Endothelial cell of umbilical vein (primary cell): ENCODE measurements at regions of chr22 and their contacts with region 1.

Region 1: DNA sequence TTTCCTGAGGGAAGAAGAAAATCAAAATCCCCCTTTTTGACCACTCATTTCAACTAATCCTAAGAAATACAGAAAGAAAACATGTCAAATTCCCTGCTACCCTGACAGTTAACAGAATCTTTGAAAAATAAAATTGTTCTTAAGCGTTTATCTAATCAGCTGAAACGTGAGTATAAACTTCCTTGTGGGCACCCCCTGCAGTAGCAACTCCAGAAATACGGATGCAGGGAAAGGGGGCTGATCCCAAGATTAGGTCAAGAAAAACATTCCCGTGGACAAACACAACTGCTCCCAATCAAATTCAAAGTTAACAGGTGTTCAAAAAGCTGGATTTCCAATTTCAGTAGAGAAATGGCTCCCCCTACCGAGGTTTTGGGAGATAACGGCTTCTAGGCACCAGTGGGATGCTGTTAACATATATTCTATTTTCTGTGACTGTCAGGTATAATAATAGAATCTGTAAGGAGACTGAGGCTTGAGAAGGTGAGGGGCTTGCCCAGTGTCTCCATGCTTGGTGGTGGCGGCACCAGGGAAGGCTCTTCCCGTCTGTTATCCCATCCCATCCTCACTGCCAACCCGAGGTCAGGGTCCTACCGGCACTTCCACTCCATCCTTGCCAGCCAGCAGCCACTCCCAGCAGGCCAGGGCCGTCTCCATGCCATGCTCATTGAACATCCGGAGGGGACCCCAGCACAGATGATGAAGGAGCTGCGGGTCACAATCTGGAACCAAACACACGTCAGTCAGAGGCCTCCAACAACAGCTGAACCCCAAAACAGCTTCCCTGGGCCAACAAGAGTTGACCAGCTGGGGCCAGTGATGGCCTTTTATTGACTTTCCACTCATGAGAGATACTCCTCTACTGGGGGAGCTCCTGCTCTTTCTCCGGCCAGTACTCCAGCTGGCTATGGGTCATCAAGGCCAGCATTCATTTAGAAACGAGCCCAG is 32.0 kb upstream of the SERPIND1 start:
- DNase-seq: peak; percentile 34
- H3K4me3 ChIP-seq: no peak overlapping the region
- H3K27ac ChIP-seq: no peak overlapping the region
- H3K4me1 ChIP-seq: peaks cover 3% of the 10 kb centered on the region
- H3K27me3 ChIP-seq: no peaks in the 10 kb centered on the region
- CTCF ChIP-seq: peak; percentile 63 to 67
- POLR2A ChIP-seq: no peak

Region 2: DNA sequence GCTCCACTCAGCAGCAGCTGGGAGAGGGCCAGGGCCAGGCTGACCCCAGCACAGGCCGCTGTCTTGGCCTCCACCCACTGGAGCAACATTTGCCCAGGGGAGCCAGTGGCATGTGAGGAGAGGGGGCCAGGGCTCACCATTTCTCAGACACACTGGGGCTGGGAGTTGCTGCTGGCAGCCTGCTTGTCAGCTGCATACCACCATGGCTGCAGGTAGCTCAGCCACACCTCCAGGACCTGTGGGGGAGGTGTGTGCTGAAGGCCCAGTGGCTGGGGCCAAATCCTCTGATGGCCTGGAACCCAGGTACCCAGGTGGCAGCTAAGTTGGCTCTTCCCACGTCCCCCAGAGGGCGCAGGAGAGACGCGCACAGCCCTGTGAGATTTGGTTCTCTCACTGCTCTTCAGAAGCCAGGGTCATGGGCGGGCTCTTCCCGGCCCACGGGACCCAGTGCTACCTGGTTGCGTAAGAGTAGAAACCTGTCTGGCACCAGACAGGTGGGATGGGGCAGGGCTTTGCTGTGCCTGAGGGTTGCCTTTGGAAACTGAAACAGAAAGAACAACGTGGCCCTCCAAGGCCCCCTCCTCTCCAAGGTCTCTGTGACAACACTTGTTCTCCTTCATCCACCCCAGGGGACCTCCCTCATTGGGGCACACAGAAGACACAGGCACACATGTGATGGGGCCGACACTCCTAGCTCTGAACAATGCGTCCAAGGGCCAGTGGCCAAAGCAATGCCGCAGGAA is 135.7 kb before region 1 on chr22:
- CTCF ChIA-PET with region 1: interaction called, 4 read pairs
- POLR2A ChIA-PET with region 1: no interaction called
- dilution Hi-C with region 1: no loop called
- intact Hi-C with region 1: loop called (anchors 1 kb)
- DNase-seq: peak; percentile 49
- H3K4me3 ChIP-seq: no peak overlapping the region
- H3K27ac ChIP-seq: no peak overlapping the region
- H3K4me1 ChIP-seq: no peaks in the 10 kb centered on the region
- H3K27me3 ChIP-seq: peaks cover 0 to 1% of the 10 kb centered on the region in 2 experiments
- CTCF ChIP-seq: peak; percentile 65 to 89
- POLR2A ChIP-seq: no peak

Region 3: DNA sequence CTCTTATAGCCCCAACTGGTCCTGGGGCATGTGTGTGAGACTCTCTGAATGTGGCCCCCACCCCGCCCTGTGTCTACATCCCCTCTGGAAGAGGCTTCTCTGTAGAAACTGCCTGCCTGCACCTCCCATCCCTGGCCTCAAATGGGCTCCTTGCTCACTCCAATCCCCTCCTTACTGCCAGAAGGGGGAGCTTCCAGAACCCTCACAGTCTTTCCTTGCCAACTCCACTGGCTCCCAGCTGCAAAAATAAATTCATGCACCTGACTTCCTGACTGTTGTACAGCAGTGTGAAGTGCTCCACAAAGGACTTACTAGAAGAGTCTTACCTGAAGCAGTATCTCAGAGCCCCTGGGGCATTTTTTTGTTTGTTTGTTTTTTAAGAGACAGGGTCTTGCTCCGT is 16.8 kb after region 1 on chr22:
- CTCF ChIA-PET with region 1: interaction called, 10 read pairs
- POLR2A ChIA-PET with region 1: no interaction called
- dilution Hi-C with region 1: no loop called
- intact Hi-C with region 1: no loop called
- DNase-seq: peak; percentile 15
- H3K4me3 ChIP-seq: no peak overlapping the region
- H3K27ac ChIP-seq: no peak overlapping the region
- H3K4me1 ChIP-seq: no peaks in the 10 kb centered on the region
- H3K27me3 ChIP-seq: no peaks in the 10 kb centered on the region
- CTCF ChIP-seq: peak in 1 of 2 donors; percentile 14
- POLR2A ChIP-seq: no peak